ENCODE measurements at regions of chr12 and their contacts with region 1.

Region 1: DNA sequence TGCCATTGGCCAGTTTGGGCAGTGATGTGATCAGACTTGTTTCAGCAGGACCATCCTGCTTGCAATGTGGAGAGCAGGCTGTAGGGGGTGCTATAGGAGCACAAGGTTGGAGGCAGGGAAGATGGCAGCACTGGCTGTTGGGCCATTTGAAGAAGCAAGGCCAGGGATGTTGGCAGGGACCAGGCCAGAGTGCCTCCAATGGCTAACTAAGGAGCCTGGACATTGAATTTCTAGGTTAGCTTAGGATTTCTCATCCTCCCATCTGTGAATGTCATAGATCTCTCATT is 23.5 kb downstream of the FGF23 start:
- DNase-seq: no peak
- H3K4me3 ChIP-seq: no peak overlapping the region
- H3K27ac ChIP-seq: no peak overlapping the region
- H3K4me1 ChIP-seq: no peaks in the 10 kb centered on the region
- H3K27me3 ChIP-seq: no peaks in the 10 kb centered on the region
- CTCF ChIP-seq: peak in 1 of 6 experiments; percentile 41
- POLR2A ChIP-seq: no peak

Region 2: GRCh38 chr12:4074129-4074528 is 281.9 kb before region 1 on chr12:
- intact Hi-C with region 1: no loop called
- DNase-seq: no peak
- H3K4me3 ChIP-seq: no peak overlapping the region
- H3K27ac ChIP-seq: no peak overlapping the region
- H3K4me1 ChIP-seq: no peaks in the 10 kb centered on the region
- H3K27me3 ChIP-seq: peaks cover 0 to 15% (median 0%) of the 10 kb centered on the region in 4 donors
- CTCF ChIP-seq: no peak
- POLR2A ChIP-seq: no peak

Region 3: GRCh38 chr12:4538207-4539160 is 182.5 kb after region 1 on chr12 and contains the start of gene RAD51AP1:
- intact Hi-C with region 1: loop called (anchors 10 kb)
- DNase-seq: peak; percentile 70
- H3K4me3 ChIP-seq: peak within 1 kb of the TSS; percentile 58 to 91 (median 73)
- H3K27ac ChIP-seq: peak within 1 kb of the TSS; percentile 88 to 95 (median 94)
- H3K4me1 ChIP-seq: peaks cover 7 to 30% (median 14%) of the 10 kb centered on the region in 3 donors
- H3K27me3 ChIP-seq: no peaks in the 10 kb centered on the region
- CTCF ChIP-seq: peak in 1 of 6 experiments; percentile 12
- POLR2A ChIP-seq: peak in 1 of 4 donors; percentile 29
- total RNA-seq, gene RAD51AP1: 4.4 to 16.5 (median 10.3) TPM